A549 (cell line): ENCODE measurements at regions of chr17 and their contacts with region 1.

Region 1: GRCh38 chr17:16304830-16305229 is 48.4 kb downstream of the CENPV start:
- DNase-seq: peak in 1 of 2 experiments; percentile 78
- ATAC-seq: peak; percentile 93 to 95
- H3K4me3 ChIP-seq: no peak overlapping the region
- H3K27ac ChIP-seq: peak overlapping the region; percentile 20 to 58; a peak in 4 of 6 replicates
- H3K4me1 ChIP-seq: peaks cover 18% of the 10 kb centered on the region
- CTCF ChIP-seq: peak; percentile 72
- EP300 ChIP-seq: no peak
- POLR2A ChIP-seq: no peak
- RAD21 ChIP-seq: peak; percentile 80 to 83

Region 2: DNA sequence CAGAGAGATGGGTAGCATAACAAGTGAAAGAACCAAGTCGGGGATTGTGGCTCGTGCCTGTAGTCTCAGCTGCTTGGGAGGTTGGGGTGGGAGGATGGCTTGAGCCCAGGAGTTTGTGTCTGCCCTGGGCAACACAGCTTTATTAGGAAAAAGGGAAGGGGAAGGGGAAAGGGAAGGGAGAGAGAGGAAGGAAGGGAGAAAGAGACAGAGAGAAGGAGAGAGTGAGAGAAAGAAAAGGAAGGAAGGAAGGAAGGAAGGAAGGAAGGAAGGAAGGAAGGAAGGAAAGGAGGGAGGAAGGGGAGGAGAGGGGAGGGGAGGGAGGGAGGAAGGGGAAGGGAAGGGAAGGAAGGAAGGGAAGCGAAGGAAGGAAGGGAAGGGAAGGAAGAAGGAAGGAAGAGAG is 15.1 kb after region 1 on chr17:
- CTCF ChIA-PET with region 1: interaction called, 58 read pairs
- POLR2A ChIA-PET with region 1: no interaction called
- DNase-seq: no peak
- ATAC-seq: no peak
- H3K4me3 ChIP-seq: no peak overlapping the region
- H3K27ac ChIP-seq: no peak overlapping the region
- H3K4me1 ChIP-seq: no peaks in the 10 kb centered on the region
- CTCF ChIP-seq: no peak
- EP300 ChIP-seq: no peak
- POLR2A ChIP-seq: no peak
- RAD21 ChIP-seq: no peak

Region 3: GRCh38 chr17:16329519-16330271 is 24.9 kb after region 1 on chr17:
- CTCF ChIA-PET with region 1: interaction called, 58 read pairs
- POLR2A ChIA-PET with region 1: no interaction called
- DNase-seq: peak; percentile 64 to 67
- ATAC-seq: peak; percentile 87 to 88
- H3K4me3 ChIP-seq: 0 out of 3 replicates have a peak overlapping the region, but pooled peaks have one; percentile 5
- H3K27ac ChIP-seq: peak overlapping the region; percentile 62 to 79
- H3K4me1 ChIP-seq: peaks cover 39% of the 10 kb centered on the region
- CTCF ChIP-seq: no peak
- EP300 ChIP-seq: no peak
- POLR2A ChIP-seq: no peak
- RAD21 ChIP-seq: no peak

Region 4: DNA sequence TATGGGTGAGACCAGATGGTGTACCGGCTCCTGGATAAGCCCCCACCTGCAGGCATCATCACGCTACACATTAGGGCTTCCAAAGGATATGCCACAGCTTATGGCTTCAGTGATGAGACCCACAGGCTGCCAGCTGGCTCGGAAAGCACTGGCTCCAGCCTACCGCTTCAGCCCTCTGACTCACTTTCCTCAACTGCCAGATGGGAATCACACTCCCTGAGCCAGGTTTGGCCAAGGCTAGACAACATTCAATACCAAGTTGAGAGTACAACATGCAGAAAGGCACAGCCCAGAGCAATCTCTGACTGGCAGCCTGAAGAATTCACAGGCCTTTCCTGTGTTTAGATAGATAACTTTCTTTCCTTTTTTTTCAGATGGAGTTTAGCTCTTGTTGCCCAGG is 38.1 kb after region 1 on chr17:
- CTCF ChIA-PET with region 1: interaction called, 100 read pairs
- POLR2A ChIA-PET with region 1: interaction called, 6 read pairs
- DNase-seq: no peak
- ATAC-seq: no peak
- H3K4me3 ChIP-seq: no peak overlapping the region
- H3K27ac ChIP-seq: no peak overlapping the region
- H3K4me1 ChIP-seq: peaks cover 13% of the 10 kb centered on the region
- CTCF ChIP-seq: no peak
- EP300 ChIP-seq: no peak
- POLR2A ChIP-seq: no peak
- RAD21 ChIP-seq: no peak